Mammary epithelial cell (primary cell): ENCODE measurements at regions of chr6 and their contacts with region 1.

Region 1: GRCh38 chr6:121897337-121897760 is 461.9 kb downstream of the GJA1 start:
- DNase-seq: peak; percentile 79
- H3K4me3 ChIP-seq: no peak overlapping the region
- H3K27ac ChIP-seq: peak overlapping the region; percentile 18
- H3K4me1 ChIP-seq: peaks cover 29% of the 10 kb centered on the region
- H3K27me3 ChIP-seq: no peaks in the 10 kb centered on the region
- CTCF ChIP-seq: no peak

Region 2: DNA sequence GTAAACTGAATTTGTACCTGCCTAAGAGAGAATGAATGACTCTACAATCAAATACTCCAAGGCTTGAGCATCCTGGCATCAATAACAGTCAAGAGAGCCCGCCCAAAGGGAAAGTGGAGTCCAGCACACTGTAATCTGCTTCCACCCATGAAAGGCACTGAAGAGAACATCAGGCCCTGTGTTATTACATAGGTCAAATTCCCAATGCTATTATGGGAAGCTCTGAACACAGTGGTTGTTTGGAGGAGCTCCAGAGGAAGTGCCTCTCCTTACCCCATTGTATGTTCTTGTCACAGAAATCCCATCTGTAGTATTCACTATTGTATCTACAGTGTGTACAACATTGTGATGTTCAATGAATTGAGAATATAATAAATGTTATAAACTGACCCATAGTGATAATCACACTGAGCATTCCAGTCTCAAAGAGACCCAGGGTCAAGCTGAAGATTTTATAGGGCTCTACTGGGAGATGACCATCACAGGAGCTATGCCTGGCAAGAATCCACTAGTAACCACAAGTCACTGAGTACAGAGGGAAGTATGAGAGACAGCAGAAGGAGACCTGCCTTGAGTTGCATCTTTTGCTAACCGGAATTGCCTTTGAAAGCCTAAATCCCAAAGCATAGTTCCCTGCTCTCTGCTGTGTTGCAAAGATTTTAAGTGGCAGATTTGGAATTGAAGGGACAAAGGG is 15.2 kb before region 1 on chr6:
- CTCF ChIA-PET with region 1: no interaction called
- dilution Hi-C with region 1: no loop called
- in situ Hi-C with region 1: no loop called
- intact Hi-C with region 1: no loop called
- DNase-seq: peak; percentile 46
- H3K4me3 ChIP-seq: no peak overlapping the region
- H3K27ac ChIP-seq: no peak overlapping the region
- H3K4me1 ChIP-seq: peaks cover 4% of the 10 kb centered on the region
- H3K27me3 ChIP-seq: no peaks in the 10 kb centered on the region
- CTCF ChIP-seq: no peak

Region 3: GRCh38 chr6:122020588-122021264 is 123.4 kb after region 1 on chr6:
- CTCF ChIA-PET with region 1: no interaction called
- dilution Hi-C with region 1: no loop called
- in situ Hi-C with region 1: no loop called
- intact Hi-C with region 1: loop called (anchors 2 kb)
- DNase-seq: no peak
- H3K4me3 ChIP-seq: no peak overlapping the region
- H3K27ac ChIP-seq: no peak overlapping the region
- H3K4me1 ChIP-seq: peaks cover 9% of the 10 kb centered on the region
- H3K27me3 ChIP-seq: no peaks in the 10 kb centered on the region
- CTCF ChIP-seq: no peak